ENCODE measurements at regions of chr15 and their contacts with region 1.

Region 1: DNA sequence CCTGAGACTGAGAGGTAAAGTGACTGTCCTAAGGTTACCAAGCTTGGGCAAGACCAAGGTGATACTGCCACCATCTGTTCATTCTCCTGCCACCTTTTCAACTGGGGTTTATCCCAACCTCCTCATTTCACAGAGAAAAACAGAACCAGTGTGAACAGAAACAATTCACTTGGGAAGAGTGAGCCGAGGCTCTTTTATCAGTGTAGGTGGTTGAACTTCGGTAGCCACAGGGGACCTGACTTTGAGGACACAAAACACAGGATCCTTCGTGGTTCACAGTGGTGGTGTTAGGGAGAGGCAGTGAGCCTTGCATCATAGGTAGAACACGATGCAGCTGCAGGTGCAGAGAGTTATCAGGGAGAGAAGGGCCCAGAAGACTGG is 72.8 kb upstream of the ICE2 start:
- DNase-seq: no peak
- H3K4me3 ChIP-seq: peak overlapping the region; percentile 14
- H3K4me3 Mint-ChIP-seq: peak overlapping the region; percentile 57 to 93 (median 83)
- H3K27ac ChIP-seq: no peak overlapping the region
- H3K27ac Mint-ChIP-seq: peak overlapping the region; percentile 84 to 99 (median 96)
- H3K4me1 ChIP-seq: peaks cover 87% of the 10 kb centered on the region
- H3K4me1 Mint-ChIP-seq: peaks cover 93 to 98% (median 98%) of the 10 kb centered on the region in 3 donors
- H3K27me3 ChIP-seq: no peaks in the 10 kb centered on the region
- H3K27me3 Mint-ChIP-seq: no peaks in the 10 kb centered on the region

Region 2: DNA sequence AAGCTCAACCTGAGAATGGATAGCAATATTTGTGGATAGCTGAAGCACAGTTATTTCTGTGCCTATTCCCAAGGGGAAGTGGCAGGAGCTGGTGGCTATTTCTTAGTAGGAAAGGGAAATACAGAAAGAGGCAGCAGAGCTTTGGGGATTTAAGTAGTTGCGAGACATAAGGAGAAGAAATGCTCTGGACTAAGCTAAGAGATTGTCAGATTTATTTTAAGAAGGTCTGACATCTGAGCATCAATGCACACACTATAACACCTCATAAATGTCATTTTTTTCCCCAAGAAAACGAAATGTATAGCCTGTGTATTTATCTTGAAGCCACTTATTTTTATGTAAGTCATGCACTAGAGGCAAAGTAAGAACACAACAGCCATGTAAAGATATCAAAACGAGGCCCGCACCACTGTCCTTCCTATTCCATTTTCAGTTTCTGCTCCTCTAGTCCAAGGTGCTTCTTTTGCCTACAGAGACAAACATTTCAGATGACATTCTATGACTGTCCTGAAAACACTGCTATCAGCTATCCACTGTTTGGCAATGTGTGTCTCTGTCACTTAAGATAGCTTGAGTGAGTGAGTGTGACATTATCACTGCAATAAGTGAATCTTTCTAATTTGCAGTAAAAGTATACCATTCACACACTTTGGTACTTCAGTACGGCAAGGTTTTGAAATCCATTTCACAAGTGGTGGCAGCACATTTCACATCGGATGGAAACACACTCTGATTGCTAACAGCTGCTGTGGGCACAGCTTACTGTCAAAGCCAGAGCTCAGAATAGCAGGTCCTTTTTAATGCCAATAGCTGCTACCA is 10.1 kb before region 1 on chr15:
- CTCF ChIA-PET with region 1: interaction called, 4 read pairs
- POLR2A ChIA-PET with region 1: interaction called, 10 read pairs
- DNase-seq: no peak
- H3K4me3 ChIP-seq: no peak overlapping the region
- H3K4me3 Mint-ChIP-seq: peak overlapping the region; percentile 34 to 88 (median 69)
- H3K27ac ChIP-seq: no peak overlapping the region
- H3K27ac Mint-ChIP-seq: peak overlapping the region; percentile 66 to 99 (median 93)
- H3K4me1 ChIP-seq: peaks cover 94% of the 10 kb centered on the region
- H3K4me1 Mint-ChIP-seq: peaks cover 97 to 100% (median 100%) of the 10 kb centered on the region in 3 donors
- H3K27me3 ChIP-seq: no peaks in the 10 kb centered on the region
- H3K27me3 Mint-ChIP-seq: no peaks in the 10 kb centered on the region

Region 3: DNA sequence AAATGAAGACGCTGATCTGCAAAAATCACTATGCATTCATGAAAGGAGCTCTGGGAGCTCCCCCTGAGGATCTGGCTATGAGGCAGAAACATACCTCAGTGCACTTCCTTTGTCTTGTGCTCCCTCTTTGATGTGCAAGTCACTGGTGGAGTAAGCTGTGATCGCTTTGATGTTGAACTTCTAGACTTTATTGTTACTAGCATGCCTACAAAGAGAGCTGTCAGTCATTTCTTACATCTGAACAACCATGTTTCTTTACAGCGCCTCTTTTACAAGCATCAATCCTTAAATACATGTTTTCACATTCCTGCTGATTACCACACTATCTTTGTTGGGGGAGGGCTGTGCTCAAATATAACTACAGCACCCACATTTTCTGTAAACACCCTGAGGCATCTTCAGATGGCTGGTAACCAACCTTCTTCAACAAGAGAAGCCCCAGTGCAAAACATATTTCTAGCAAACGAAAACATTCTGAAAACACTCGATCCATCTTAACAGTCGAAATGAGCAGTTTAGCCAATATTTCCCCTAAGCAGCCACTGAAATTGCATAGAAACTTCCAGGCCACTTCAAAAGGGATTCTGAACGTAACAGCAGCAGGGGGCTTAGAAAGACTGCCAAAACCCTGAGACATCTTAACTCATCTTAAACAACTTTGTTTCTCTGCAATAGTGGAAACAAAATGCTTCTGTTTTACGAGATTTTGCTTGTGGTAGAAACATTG is 29.0 kb after region 1 on chr15:
- CTCF ChIA-PET with region 1: interaction called, 11 read pairs
- POLR2A ChIA-PET with region 1: interaction called, 27 read pairs
- DNase-seq: peak in 4 of 5 donors; percentile 34 to 85 (median 77)
- H3K4me3 ChIP-seq: peak overlapping the region; percentile 36
- H3K4me3 Mint-ChIP-seq: peak overlapping the region; percentile 64 to 81 (median 78)
- H3K27ac ChIP-seq: no peak overlapping the region
- H3K27ac Mint-ChIP-seq: peak overlapping the region; percentile 93 to 99 (median 95)
- H3K4me1 ChIP-seq: peaks cover 91% of the 10 kb centered on the region
- H3K4me1 Mint-ChIP-seq: peaks cover 90 to 95% (median 94%) of the 10 kb centered on the region in 3 donors
- H3K27me3 ChIP-seq: no peaks in the 10 kb centered on the region
- H3K27me3 Mint-ChIP-seq: no peaks in the 10 kb centered on the region

Measured in CD8-positive, alpha-beta memory T cell (primary cell).